SK-N-SH (cell line): ENCODE measurements at regions of chr9 and their contacts with region 1.

Region 1: GRCh38 chr9:105881654-105882349 is 187.5 kb downstream of the TMEM38B start:
- DNase-seq: peak; percentile 44
- H3K4me3 ChIP-seq: peak overlapping the region in 1 of 2 experiments; percentile 45; a peak in 1 of 4 replicates
- H3K27ac ChIP-seq: no peak overlapping the region
- H3K4me1 ChIP-seq: peaks cover 0 to 5% of the 10 kb centered on the region in 2 experiments; a peak in 1 of 4 replicates
- H3K27me3 ChIP-seq: no peaks in the 10 kb centered on the region
- CTCF ChIP-seq: peak; percentile 90
- EP300 ChIP-seq: no peak
- RAD21 ChIP-seq: peak; percentile 87

Region 2: DNA sequence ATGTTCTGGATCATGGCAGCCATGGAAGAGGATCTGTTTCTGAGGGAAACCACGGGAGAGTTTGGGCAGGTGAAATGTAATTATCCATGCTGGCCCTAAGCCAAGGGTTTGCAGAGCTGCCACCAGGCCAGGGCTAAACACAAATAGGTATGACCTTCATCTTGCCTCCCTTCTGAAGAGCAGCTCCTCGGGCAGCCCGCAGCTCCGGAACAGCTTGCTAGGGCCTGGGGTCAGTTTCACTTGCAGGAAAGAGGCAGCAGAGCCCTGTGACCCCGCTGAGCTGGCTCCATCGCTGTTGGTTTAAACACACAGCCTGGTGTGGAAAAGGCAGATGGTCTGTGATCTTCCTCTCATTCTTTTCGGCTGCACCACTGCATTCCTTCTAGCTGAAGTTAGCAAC is 46.1 kb before region 1 on chr9:
- CTCF ChIA-PET with region 1: interaction called, 144 read pairs
- POLR2A ChIA-PET with region 1: interaction called, 3 read pairs
- DNase-seq: no peak
- H3K4me3 ChIP-seq: no peak overlapping the region
- H3K27ac ChIP-seq: no peak overlapping the region
- H3K4me1 ChIP-seq: peaks cover 0 to 4% of the 10 kb centered on the region in 2 experiments; a peak in 1 of 4 replicates
- H3K27me3 ChIP-seq: no peaks in the 10 kb centered on the region
- CTCF ChIP-seq: no peak
- EP300 ChIP-seq: no peak
- RAD21 ChIP-seq: no peak

Region 3: DNA sequence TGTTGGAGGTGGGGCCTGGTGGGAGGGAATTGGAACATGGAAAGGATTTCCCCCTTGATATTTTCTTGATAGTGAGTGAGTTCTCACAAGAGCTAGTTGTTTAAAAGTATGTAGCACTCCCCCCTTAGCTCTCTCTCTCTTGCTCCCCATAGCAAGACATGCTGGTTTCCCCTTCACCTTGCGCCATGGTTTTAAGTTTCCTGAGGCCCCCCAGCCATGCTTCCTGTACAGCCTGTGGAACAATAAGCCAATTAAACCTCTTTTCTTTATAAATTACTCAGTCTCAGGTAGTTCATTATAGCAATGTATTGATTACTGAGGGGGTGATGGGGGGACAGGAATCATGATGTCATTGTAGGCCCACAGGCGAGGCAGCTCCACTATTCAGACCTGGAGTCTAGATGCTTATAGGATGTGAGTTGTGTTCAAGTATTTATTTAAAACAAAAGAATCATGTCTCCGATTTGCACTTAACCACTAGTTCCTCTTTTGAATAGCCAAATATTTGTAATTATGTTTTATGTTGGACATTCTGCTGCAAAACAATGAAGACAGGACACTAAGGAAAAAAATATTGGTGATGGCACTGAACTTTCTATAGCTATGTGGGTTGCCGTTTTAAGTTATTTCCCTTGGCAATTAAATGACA is 30.8 kb before region 1 on chr9:
- CTCF ChIA-PET with region 1: interaction called, 144 read pairs
- POLR2A ChIA-PET with region 1: no interaction called
- DNase-seq: no peak
- H3K4me3 ChIP-seq: no peak overlapping the region
- H3K27ac ChIP-seq: no peak overlapping the region
- H3K4me1 ChIP-seq: peaks cover 0 to 9% of the 10 kb centered on the region in 2 experiments; a peak in 2 of 4 replicates
- H3K27me3 ChIP-seq: no peaks in the 10 kb centered on the region
- CTCF ChIP-seq: no peak
- EP300 ChIP-seq: no peak
- RAD21 ChIP-seq: no peak

Region 4: GRCh38 chr9:105858006-105858690 is 23.7 kb before region 1 on chr9:
- CTCF ChIA-PET with region 1: interaction called, 26 read pairs
- POLR2A ChIA-PET with region 1: no interaction called
- DNase-seq: no peak
- H3K4me3 ChIP-seq: no peak overlapping the region
- H3K27ac ChIP-seq: no peak overlapping the region
- H3K4me1 ChIP-seq: peaks cover 0 to 16% of the 10 kb centered on the region in 2 experiments; a peak in 2 of 4 replicates
- H3K27me3 ChIP-seq: no peaks in the 10 kb centered on the region
- CTCF ChIP-seq: no peak
- EP300 ChIP-seq: no peak
- RAD21 ChIP-seq: no peak

Region 5: GRCh38 chr9:105864248-105864898 is 17.4 kb before region 1 on chr9:
- CTCF ChIA-PET with region 1: interaction called, 20 read pairs
- POLR2A ChIA-PET with region 1: interaction called, 3 read pairs
- DNase-seq: no peak
- H3K4me3 ChIP-seq: no peak overlapping the region
- H3K27ac ChIP-seq: no peak overlapping the region
- H3K4me1 ChIP-seq: no peaks in the 10 kb centered on the region
- H3K27me3 ChIP-seq: no peaks in the 10 kb centered on the region
- CTCF ChIP-seq: no peak
- EP300 ChIP-seq: no peak
- RAD21 ChIP-seq: no peak

Region 6: DNA sequence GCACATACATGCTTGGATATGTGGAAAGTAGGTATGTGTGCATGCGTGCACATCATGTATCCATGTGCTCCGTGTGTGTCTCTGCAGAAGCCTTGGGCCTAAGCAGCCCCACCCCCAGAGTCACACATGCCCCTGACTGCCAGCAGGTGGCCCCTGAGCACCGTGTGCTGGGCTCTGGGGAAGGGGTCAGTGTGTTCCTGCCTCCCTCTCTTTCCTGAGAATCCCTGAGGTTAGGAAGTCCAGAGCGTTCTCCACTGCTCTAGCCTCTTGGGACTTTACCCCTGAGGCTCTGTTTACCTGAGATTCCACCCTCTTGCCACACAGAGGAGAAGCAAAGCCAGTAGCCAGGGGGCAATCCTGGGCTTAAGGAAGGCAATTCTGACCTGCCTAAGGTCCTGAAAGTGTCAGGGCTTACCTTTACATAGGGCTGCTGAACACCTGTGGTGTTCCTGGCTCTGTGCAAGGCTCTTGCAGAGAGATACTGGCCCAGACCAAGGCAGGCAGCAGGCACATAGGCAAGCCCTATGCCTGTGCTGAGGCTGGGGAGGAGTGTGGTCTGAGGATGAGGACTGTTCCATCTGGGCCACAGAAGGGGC is 19.8 kb after region 1 on chr9:
- CTCF ChIA-PET with region 1: interaction called, 14 read pairs
- POLR2A ChIA-PET with region 1: no interaction called
- DNase-seq: peak; percentile 84
- H3K4me3 ChIP-seq: no peak overlapping the region
- H3K27ac ChIP-seq: no peak overlapping the region
- H3K4me1 ChIP-seq: peaks cover 0 to 6% of the 10 kb centered on the region in 2 experiments; a peak in 1 of 4 replicates
- H3K27me3 ChIP-seq: no peaks in the 10 kb centered on the region
- CTCF ChIP-seq: peak; percentile 42
- EP300 ChIP-seq: no peak
- RAD21 ChIP-seq: peak; percentile 98

Region 7: GRCh38 chr9:106146066-106146840 is 264.5 kb after region 1 on chr9:
- CTCF ChIA-PET with region 1: no interaction called
- POLR2A ChIA-PET with region 1: no interaction called
- DNase-seq: no peak
- H3K4me3 ChIP-seq: no peak overlapping the region
- H3K27ac ChIP-seq: no peak overlapping the region
- H3K4me1 ChIP-seq: no peaks in the 10 kb centered on the region
- H3K27me3 ChIP-seq: no peaks in the 10 kb centered on the region
- CTCF ChIP-seq: no peak
- EP300 ChIP-seq: no peak
- RAD21 ChIP-seq: no peak